Vagina (tissue), 2 donors: ENCODE measurements at regions of chr5 and their contacts with region 1.

Region 1: GRCh38 chr5:54090495-54091084 is 219.8 kb downstream of the ARL15 start:
- DNase-seq: no peak
- H3K4me3 ChIP-seq: no peak overlapping the region
- H3K27ac ChIP-seq: no peak overlapping the region
- H3K4me1 ChIP-seq: no peaks in the 10 kb centered on the region
- H3K27me3 ChIP-seq: no peaks in the 10 kb centered on the region
- CTCF ChIP-seq: no peak
- POLR2A ChIP-seq: no peak

Region 2: GRCh38 chr5:54073735-54074134 is 16.9 kb before region 1 on chr5:
- intact Hi-C with region 1: loop called (anchors 1 kb)
- DNase-seq: no peak
- H3K4me3 ChIP-seq: no peak overlapping the region
- H3K27ac ChIP-seq: no peak overlapping the region
- H3K4me1 ChIP-seq: no peaks in the 10 kb centered on the region
- H3K27me3 ChIP-seq: no peaks in the 10 kb centered on the region
- CTCF ChIP-seq: no peak
- POLR2A ChIP-seq: no peak

Region 3: GRCh38 chr5:55847837-55848236 is 1757.2 kb after region 1 on chr5:
- intact Hi-C with region 1: loop called (anchors 10 kb)
- DNase-seq: no peak
- H3K4me3 ChIP-seq: no peak overlapping the region
- H3K27ac ChIP-seq: no peak overlapping the region
- H3K4me1 ChIP-seq: no peaks in the 10 kb centered on the region
- H3K27me3 ChIP-seq: no peaks in the 10 kb centered on the region
- CTCF ChIP-seq: no peak
- POLR2A ChIP-seq: no peak